Activated naive CD4-positive, alpha-beta T cell treated with anti-CD3 and anti-CD28 coated beads for 36 hours (primary cell): ENCODE measurements at regions of chr6 and their contacts with region 1.

Region 1: DNA sequence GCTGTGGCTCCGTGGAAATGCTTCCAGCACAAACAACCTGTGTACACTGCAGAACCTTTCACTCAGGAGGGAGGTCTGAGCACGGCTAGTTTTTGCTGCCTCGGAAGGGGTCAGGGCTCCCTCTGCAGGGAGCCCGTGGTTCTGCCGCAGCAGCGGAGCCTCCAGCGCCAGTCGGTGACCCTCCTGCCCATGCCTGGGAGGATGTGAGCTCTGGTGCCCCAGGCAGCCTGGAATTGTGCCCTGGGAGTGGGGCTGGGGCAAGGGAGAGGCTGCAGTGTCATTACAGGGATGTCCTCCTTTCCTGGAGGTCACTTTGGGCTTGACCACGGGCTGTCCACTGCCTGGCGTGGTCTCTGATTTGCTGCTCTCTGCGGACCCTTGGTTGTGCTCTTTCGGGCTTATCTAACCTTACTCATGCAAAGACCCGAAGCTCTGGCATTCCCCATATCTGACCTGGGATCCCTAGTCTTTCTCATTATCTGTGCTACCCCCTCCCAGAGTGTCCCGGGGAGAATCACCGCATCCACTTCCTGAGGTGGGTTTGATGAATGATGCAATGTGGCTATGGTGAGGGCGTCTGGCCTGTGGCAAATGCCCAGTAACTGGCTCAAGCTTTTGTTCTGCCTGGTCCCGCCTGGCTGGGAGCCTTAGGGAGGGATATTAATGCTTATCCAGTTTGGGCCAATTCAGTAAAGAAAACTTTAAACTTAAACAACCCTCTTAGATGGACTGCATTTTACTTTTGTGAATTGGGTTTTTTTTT is 59.6 kb upstream of the TAGAP start:
- DNase-seq: peak; percentile 86
- H3K4me3 Mint-ChIP-seq: no peak overlapping the region
- H3K27ac Mint-ChIP-seq: peak overlapping the region; percentile 86
- H3K4me1 Mint-ChIP-seq: peaks cover 81% of the 10 kb centered on the region
- H3K27me3 Mint-ChIP-seq: no peaks in the 10 kb centered on the region

Region 2: DNA sequence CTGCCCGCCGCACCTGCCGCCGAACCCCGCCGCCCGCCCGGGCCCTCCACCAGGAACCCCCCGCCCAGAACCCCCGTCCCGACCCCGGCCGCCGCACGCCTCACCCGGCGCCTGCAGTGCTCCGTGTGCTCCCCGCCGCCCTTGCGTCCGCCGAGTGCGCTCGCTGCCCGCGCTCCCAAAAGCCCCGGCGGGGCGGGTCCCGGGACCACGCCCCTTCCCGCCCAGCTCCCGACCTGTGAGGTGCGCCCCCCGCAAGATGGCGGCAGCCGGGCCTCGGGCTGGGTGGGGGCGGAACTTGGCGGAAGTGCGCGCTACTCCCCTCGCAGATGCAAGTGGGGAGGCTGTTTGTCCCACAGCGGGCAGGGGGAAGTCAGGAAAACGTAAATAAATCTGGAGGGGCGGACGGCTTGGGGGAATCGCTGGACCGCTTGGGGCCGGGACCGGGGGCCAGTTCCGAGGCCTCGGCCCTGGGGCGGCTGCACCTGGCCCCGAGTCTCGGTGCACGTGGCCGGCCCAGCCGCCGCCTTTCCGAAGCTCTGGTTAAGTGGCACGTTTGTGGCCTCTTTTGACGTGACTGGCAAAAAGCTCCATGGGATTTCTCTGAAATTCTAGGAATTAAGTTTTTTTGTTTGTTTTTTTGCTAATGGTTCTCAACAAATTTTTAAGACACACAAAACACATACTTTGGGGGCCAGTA is 285.0 kb before region 1 on chr6 and contains the start of gene EZR:
- CTCF ChIA-PET with region 1: interaction called, 3 read pairs
- intact Hi-C with region 1: loop called (anchors 2 kb)
- DNase-seq: peak; percentile 87
- H3K4me3 Mint-ChIP-seq: peak within 1 kb of the TSS; percentile 97
- H3K27ac Mint-ChIP-seq: peak within 1 kb of the TSS; percentile 98
- H3K4me1 Mint-ChIP-seq: peaks cover 47% of the 10 kb centered on the region
- H3K27me3 Mint-ChIP-seq: no peaks in the 10 kb centered on the region
- total RNA-seq, gene EZR: 229 to 230 TPM

Region 3: GRCh38 chr6:158999666-159000403 is 104.5 kb before region 1 on chr6 and contains the start of gene RSPH3:
- CTCF ChIA-PET with region 1: interaction called, 20 read pairs
- intact Hi-C with region 1: loop called (anchors 1 kb)
- DNase-seq: peak; percentile 94
- H3K4me3 Mint-ChIP-seq: peak within 1 kb of the TSS; percentile 98
- H3K27ac Mint-ChIP-seq: peak within 1 kb of the TSS; percentile 82
- H3K4me1 Mint-ChIP-seq: peaks cover 45% of the 10 kb centered on the region
- H3K27me3 Mint-ChIP-seq: no peaks in the 10 kb centered on the region
- total RNA-seq, gene RSPH3: 3.0 to 3.2 TPM

Region 4: GRCh38 chr6:159033160-159034049 is 70.9 kb before region 1 on chr6:
- CTCF ChIA-PET with region 1: interaction called, 113 read pairs
- intact Hi-C with region 1: no loop called
- DNase-seq: no peak
- H3K4me3 Mint-ChIP-seq: no peak overlapping the region
- H3K27ac Mint-ChIP-seq: no peak overlapping the region
- H3K4me1 Mint-ChIP-seq: peaks cover 28% of the 10 kb centered on the region
- H3K27me3 Mint-ChIP-seq: no peaks in the 10 kb centered on the region

Region 5: DNA sequence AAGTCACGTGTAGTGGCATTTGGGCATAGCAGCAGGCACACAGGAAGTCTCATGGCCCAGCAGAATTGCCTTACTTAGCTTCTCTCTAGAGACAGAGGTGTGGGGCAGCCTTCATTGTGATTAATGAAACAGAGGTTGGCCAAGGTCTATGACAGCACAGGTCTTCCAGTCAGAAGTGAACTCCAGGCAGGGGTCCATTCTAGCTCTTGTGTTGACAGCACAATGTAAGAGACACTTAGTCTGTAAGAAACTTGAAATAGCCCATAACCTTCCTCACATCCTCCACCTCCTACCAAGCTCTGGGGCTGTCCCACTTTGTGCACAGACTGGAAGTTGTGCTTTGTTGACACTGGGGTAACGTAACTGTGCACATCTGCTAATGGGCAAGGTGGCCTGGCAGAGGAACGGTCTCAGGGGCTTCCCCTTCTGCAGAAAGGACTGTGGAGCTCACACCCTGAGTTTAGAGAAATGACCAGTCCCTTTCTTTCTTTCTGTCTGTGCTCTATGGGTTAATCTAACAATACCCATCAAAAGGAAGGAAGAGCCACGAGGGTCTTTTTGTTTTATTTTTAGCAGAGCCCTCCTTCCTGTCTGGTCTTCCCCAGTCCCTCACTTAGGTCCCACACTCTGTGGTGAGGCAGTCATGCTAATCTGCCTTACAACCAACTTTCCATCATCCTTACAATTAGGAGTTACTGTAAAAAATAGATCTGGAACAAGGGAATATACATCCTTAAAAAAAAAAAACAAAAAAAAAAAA is 23.9 kb before region 1 on chr6:
- CTCF ChIA-PET with region 1: interaction called, 22 read pairs
- intact Hi-C with region 1: no loop called
- DNase-seq: peak; percentile 79
- H3K4me3 Mint-ChIP-seq: peak overlapping the region; percentile 9
- H3K27ac Mint-ChIP-seq: peak overlapping the region; percentile 89
- H3K4me1 Mint-ChIP-seq: peaks cover 49% of the 10 kb centered on the region
- H3K27me3 Mint-ChIP-seq: no peaks in the 10 kb centered on the region